ENCODE measurements at regions of chr19 and their contacts with region 1.

Region 1: GRCh38 chr19:50500060-50500752 is 10.8 kb downstream of the JOSD2 start:
- DNase-seq: peak in 5 of 10 donors; percentile 38 to 76 (median 53)
- H3K4me3 ChIP-seq: peak overlapping the region in 55 of 59 donors; percentile 2 to 65 (median 39)
- H3K27ac ChIP-seq: peak overlapping the region in 50 of 59 donors; percentile 7 to 92 (median 63)
- H3K27me3 ChIP-seq: peaks cover 0 to 7% (median 0%) of the 10 kb centered on the region in 45 donors
- CTCF ChIP-seq: peak in 46 of 56 donors; percentile 7 to 68 (median 42)

Region 2: DNA sequence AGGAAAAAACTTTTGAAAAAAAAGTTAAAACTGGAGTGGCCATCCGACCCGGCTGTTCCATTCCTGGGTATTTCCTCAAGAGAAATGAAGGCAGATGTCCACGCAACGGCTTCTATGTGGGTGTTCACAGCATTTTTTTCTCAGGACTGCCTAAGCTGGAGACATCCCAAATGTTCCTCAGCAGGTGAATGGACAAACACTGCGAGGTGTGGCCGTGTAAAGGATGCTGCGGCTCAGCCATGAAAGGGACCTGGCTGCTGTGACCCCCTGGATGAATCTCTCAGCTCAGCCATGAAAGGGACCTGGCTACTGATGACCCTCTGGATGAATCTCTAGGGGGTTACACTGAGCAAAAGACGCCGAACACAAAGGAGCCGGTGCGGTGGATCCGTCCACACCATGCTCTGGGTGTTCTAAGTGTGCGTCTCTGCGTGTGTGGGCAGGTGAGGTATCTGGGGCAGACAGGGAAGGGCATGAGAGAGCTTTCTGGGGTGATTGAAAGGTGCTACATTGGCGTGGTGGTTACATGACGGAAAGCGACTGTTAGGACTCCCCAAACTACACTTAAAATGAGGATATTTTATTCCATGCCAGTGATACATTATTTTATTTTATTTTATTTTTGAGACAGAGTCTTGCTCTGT is 20.7 kb after region 1 on chr19:
- intact Hi-C with region 1: no loop called
- DNase-seq: no peak
- H3K4me3 ChIP-seq: no peak overlapping the region
- H3K27ac ChIP-seq: peak overlapping the region in 4 of 59 donors; percentile 11 to 19 (median 14)
- H3K27me3 ChIP-seq: no peaks in the 10 kb centered on the region
- CTCF ChIP-seq: no peak

Region 3: GRCh38 chr19:50537762-50538230 is 37.6 kb after region 1 on chr19:
- intact Hi-C with region 1: loop called in 1 of 2 experiments (anchors 5 kb)
- DNase-seq: peak; percentile 90 to 97 (median 94)
- H3K4me3 ChIP-seq: peak overlapping the region in 6 of 59 donors; percentile 4 to 25 (median 14)
- H3K27ac ChIP-seq: peak overlapping the region in 50 of 59 donors; percentile 6 to 86 (median 72)
- H3K27me3 ChIP-seq: no peaks in the 10 kb centered on the region
- CTCF ChIP-seq: peak; percentile 70 to 99 (median 95)

Region 4: GRCh38 chr19:50568321-50569075 is 68.3 kb after region 1 on chr19 and contains the start of gene LRRC4B:
- intact Hi-C with region 1: no loop called
- DNase-seq: peak in 6 of 10 donors; percentile 65 to 73 (median 68)
- H3K4me3 ChIP-seq: peak within 1 kb of the TSS; percentile 31 to 77 (median 64)
- H3K27ac ChIP-seq: peak within 1 kb of the TSS in 49 of 59 donors; percentile 2 to 85 (median 68)
- H3K27me3 ChIP-seq: peaks cover 0 to 3% (median 0%) of the 10 kb centered on the region in 45 donors
- CTCF ChIP-seq: no peak
- total RNA-seq, gene LRRC4B: 126 to 330 (median 166) TPM

Measured in dorsolateral prefrontal cortex (tissue), 120 donors.